ENCODE measurements at regions of chr13 and their contacts with region 1.

Region 1: DNA sequence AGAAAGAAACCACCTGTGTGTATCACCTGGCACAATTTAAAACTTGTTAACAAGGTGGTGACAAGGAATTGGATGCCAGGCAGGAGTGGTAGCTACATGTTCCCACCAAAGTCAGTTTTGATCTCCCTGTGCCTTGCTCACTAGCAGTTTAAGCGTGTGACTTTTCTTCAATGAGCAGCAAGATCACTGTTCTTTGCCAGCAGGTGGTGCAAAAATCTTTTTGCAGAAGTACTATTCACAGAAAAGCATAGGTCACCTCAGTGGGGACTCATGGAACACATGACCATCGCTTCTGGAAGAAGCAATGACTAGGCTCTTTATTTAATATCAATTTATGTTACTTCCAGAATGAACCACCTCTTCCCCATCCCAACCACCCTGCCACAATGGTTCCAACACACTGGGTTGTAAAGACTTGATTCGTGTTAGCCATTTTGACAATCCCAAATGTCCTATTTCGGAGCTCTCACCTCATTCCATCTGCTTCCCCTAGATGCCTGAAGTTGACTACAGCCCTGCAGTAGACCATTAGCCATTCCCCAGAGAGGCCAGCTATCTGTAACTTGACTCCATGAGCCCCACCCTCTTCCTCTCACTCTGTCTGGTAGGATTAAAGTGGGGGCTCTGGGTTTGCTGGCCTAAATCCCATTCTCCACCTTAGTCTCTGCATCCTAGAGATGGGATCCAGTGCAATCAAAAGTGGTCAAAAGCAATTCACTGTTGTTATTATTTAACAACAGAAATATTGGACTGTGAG is 59.1 kb upstream of the TNFRSF19 start:
- DNase-seq: no peak

Region 2: GRCh38 chr13:22964245-22964966 is 546.8 kb before region 1 on chr13:
- intact Hi-C with region 1: no loop called
- DNase-seq: no peak

Region 3: DNA sequence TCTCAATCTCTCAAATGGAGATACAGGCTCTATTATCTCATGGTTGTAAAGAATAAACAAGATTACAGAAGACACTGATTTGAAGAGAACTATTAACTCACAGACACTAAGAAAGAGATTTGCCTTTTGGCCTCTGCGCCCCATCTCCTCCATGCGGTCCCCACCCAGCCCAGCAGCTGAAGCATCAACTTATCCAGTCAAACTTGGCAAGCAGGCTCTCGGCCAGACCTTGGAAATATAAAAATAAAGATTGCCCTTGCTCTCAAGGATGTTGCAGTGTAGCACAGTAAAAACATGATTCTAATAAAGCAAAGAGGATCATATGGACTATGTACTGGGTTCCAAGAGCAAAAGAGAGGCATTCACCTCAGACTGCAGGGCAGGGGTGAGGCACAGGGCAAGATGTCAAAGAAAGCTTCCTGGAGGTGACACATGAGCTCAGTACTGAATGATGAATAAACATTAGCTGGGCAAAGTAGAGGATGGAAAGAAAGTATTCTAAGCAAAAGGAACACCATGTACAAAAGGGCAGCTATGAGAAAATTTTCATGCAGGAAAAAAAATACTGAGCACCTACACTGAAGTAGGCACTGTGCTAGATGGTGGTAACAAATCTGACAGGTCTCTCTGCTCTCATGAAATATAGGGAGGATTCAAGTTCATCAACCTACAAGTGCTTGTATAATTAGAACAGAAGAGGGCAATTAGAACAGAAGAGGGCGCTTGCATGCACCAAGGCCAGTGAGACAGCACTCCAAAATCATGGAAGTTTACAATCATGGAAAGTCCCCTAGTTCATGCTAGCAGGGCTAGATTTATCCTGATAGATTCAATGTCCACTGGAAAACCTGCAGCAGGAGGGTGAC is 162.7 kb before region 1 on chr13:
- intact Hi-C with region 1: no loop called
- DNase-seq: no peak

Region 4: GRCh38 chr13:23554000-23554399 is 42.8 kb after region 1 on chr13:
- intact Hi-C with region 1: loop called (anchors 5 kb)
- DNase-seq: no peak

Region 5: DNA sequence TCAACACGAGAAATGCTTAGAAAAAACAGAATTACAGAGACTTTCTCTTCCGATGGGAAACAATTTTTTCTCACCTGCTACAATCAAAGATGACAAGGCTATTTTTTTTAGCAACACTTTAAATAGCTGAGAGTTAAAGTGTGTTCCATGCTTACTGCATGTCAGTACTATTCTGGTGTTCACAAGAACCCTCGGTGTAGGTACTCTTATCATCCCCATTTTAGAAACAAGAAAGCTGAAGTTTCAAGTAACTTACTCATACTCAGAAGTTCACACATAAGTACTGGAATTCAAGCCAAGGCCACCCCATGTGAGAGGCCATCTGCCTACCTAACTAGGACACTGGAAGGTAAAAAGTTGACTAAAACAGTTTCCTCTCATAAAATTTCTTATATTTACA is 50.1 kb after region 1 on chr13:
- intact Hi-C with region 1: loop called (anchors 2 kb)
- DNase-seq: no peak

Measured in cardiac septum (tissue), 1 donor.